Activated CD8-positive, alpha-beta T cell treated with anti-CD3 and anti-CD28 coated beads for 36 hours (primary cell): ENCODE measurements at regions of chr3 and their contacts with region 1.

Region 1: GRCh38 chr3:42961633-42962032 is 17.5 kb upstream of the GASK1A start:
- DNase-seq: peak; percentile 45
- ATAC-seq: no peak
- H3K4me3 Mint-ChIP-seq: no peak overlapping the region
- H3K27ac Mint-ChIP-seq: no peak overlapping the region
- H3K4me1 Mint-ChIP-seq: peaks cover 19% of the 10 kb centered on the region
- H3K27me3 Mint-ChIP-seq: no peaks in the 10 kb centered on the region
- CTCF ChIP-seq: peak; percentile 70

Region 2: GRCh38 chr3:42946050-42946449 is 15.6 kb before region 1 on chr3:
- CTCF ChIA-PET with region 1: interaction called, 14 read pairs
- POLR2A ChIA-PET with region 1: no interaction called
- intact Hi-C with region 1: no loop called
- DNase-seq: no peak
- ATAC-seq: no peak
- H3K4me3 Mint-ChIP-seq: no peak overlapping the region
- H3K27ac Mint-ChIP-seq: no peak overlapping the region
- H3K4me1 Mint-ChIP-seq: no peaks in the 10 kb centered on the region
- H3K27me3 Mint-ChIP-seq: no peaks in the 10 kb centered on the region
- CTCF ChIP-seq: no peak

Region 3: GRCh38 chr3:42999212-42999611 is 37.6 kb after region 1 on chr3:
- CTCF ChIA-PET with region 1: interaction called, 12 read pairs
- POLR2A ChIA-PET with region 1: no interaction called
- intact Hi-C with region 1: no loop called
- DNase-seq: no peak
- ATAC-seq: no peak
- H3K4me3 Mint-ChIP-seq: no peak overlapping the region
- H3K27ac Mint-ChIP-seq: no peak overlapping the region
- H3K4me1 Mint-ChIP-seq: peaks cover 6% of the 10 kb centered on the region
- H3K27me3 Mint-ChIP-seq: no peaks in the 10 kb centered on the region
- CTCF ChIP-seq: no peak

Region 4: DNA sequence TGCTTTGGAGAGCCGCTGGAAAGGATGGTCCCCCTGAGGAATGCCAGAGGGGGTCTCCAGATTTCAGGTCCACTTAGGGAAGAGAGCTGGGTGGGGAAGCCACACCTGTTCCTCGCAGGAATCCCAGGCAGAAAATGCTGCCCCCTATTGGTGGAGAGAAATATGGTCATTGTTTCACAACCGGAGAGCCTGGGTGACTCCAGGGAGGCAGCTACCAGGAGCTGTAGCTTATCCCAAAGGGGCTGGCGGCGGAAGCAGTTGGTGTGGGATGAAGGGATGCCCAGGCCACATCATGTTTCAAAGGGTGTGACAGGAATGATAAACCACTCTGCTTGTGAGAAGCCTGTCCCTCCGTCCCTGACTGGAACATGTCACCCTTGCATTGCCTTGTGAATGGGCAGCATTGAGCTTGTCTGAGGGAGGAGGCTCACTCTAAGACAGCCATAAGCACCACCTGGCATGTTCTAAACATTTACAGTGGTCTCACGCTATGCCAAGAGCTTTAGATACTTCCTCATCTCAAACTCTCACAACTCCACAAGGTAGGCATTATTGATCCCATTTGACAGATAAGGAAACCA is 109.8 kb after region 1 on chr3:
- CTCF ChIA-PET with region 1: interaction called, 29 read pairs
- POLR2A ChIA-PET with region 1: no interaction called
- intact Hi-C with region 1: loop called (anchors 10 kb)
- DNase-seq: peak; percentile 12
- ATAC-seq: no peak
- H3K4me3 Mint-ChIP-seq: no peak overlapping the region
- H3K27ac Mint-ChIP-seq: no peak overlapping the region
- H3K4me1 Mint-ChIP-seq: peaks cover 3% of the 10 kb centered on the region
- H3K27me3 Mint-ChIP-seq: no peaks in the 10 kb centered on the region
- CTCF ChIP-seq: peak; percentile 95

Region 5: GRCh38 chr3:43093006-43093405 is 131.4 kb after region 1 on chr3:
- CTCF ChIA-PET with region 1: interaction called, 16 read pairs
- POLR2A ChIA-PET with region 1: no interaction called
- intact Hi-C with region 1: no loop called
- DNase-seq: no peak
- ATAC-seq: no peak
- H3K4me3 Mint-ChIP-seq: no peak overlapping the region
- H3K27ac Mint-ChIP-seq: no peak overlapping the region
- H3K4me1 Mint-ChIP-seq: peaks cover 2% of the 10 kb centered on the region
- H3K27me3 Mint-ChIP-seq: no peaks in the 10 kb centered on the region
- CTCF ChIP-seq: no peak

Region 6: DNA sequence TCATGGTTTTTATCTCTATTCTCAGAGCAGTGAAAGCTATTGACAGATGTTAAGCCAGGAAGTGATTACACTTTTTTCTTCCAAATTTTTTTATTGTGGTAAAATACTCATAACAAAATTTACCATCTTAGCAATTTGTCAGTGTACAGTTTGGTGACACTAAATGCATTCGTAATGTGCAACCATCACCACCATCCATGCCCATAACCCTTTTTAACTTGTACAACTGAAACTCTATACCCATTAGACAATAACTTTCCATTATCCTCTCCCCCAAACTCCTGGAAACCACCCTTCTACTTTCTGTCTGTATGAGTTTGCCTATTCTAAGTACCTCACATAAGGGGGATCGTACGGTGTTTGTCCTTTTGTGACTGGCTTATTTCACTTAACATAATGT is 159.3 kb after region 1 on chr3:
- CTCF ChIA-PET with region 1: interaction called, 10 read pairs
- POLR2A ChIA-PET with region 1: no interaction called
- intact Hi-C with region 1: no loop called
- DNase-seq: no peak
- ATAC-seq: peak; percentile 34
- H3K4me3 Mint-ChIP-seq: no peak overlapping the region
- H3K27ac Mint-ChIP-seq: no peak overlapping the region
- H3K4me1 Mint-ChIP-seq: peaks cover 4% of the 10 kb centered on the region
- H3K27me3 Mint-ChIP-seq: peaks cover 3% of the 10 kb centered on the region
- CTCF ChIP-seq: no peak

Region 7: DNA sequence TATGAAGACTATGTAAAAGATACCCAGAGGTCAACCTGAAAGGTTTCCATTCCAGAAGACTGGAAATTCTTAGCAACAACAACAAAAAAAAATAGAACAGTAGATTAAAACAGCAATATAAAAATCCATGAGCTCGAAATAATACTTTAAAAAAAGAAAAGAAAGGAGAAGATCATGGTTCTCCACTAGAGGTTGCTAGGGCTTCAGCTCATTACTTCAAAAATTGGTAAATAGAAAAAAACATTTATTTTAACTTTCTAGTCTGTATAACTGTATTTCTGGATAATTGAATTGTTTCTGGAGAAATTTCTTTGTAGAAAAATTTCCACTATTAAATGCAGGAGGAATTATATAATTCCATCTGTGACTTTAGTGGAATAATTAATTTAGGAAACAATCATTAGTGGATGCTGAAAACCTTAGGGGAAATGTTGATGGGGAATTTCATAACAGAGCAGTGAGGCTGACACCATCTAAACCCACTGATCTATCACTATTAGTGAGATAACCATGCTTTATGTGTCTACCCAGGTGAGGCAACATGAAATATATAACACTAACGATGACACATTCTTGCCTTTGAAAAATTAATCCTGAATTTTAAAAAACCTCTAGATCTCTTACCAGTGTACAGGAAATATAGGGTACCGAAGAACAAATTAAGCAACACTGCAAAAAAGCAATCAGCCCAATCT is 262.2 kb after region 1 on chr3:
- CTCF ChIA-PET with region 1: interaction called, 10 read pairs
- POLR2A ChIA-PET with region 1: interaction called, 3 read pairs
- intact Hi-C with region 1: no loop called
- DNase-seq: no peak
- ATAC-seq: peak; percentile 45
- H3K4me3 Mint-ChIP-seq: no peak overlapping the region
- H3K27ac Mint-ChIP-seq: peak overlapping the region; percentile 54
- H3K4me1 Mint-ChIP-seq: peaks cover 51% of the 10 kb centered on the region
- H3K27me3 Mint-ChIP-seq: no peaks in the 10 kb centered on the region
- CTCF ChIP-seq: peak; percentile 67